Activated CD4-positive, alpha-beta T cell treated with anti-CD3 and anti-CD28 coated beads for 36 hours (primary cell): ENCODE measurements at regions of chr14 and their contacts with region 1.

Region 1: GRCh38 chr14:63478010-63478409 is 65.2 kb downstream of the PPP2R5E start:
- DNase-seq: peak; percentile 30
- ATAC-seq: peak; percentile 90
- H3K4me3 Mint-ChIP-seq: no peak overlapping the region
- H3K27ac Mint-ChIP-seq: no peak overlapping the region
- H3K4me1 Mint-ChIP-seq: peaks cover 52% of the 10 kb centered on the region
- H3K27me3 Mint-ChIP-seq: no peaks in the 10 kb centered on the region

Region 2: DNA sequence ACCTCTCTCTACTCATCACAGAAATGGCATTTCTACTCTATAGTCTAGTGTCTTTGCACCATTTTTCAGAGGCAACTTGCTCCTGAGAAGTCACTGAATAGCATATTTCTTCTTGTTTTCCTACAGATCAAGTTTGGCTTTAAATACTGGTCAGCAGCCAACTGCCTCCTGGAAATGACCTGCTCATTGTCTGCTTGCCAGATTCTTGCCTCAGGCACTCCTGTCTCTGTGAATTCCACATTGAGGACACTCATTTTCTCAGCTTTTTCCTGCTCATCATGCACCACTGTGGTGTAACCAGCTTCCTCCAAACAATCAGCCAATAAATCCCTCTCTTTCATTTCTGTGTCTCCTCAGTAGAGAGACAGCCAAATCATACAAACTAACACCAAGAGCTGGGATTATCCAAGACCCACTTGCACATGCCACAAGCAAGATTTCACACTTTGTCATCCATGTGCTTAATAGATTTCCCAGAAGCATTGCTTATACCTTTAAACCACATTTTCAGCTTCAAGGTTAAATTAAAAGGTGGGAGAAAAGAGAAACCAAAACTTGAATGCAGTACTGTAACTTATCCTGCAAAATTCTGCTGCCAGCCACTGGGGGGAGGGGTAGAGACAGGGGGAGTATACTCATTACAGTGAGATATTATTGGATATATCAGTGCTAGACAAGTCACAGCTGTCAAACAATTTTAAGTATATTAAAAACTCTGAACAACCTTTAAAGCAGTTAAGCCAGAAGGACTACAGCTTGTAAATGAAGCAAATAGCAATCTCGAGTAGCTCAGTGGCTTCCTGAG is 39.9 kb before region 1 on chr14:
- CTCF ChIA-PET with region 1: no interaction called
- POLR2A ChIA-PET with region 1: no interaction called
- intact Hi-C with region 1: loop called in 1 of 2 experiments (anchors 1 kb)
- DNase-seq: peak; percentile 58
- ATAC-seq: peak; percentile 84
- H3K4me3 Mint-ChIP-seq: peak overlapping the region; percentile 12
- H3K27ac Mint-ChIP-seq: peak overlapping the region; percentile 32
- H3K4me1 Mint-ChIP-seq: peaks cover 62% of the 10 kb centered on the region
- H3K27me3 Mint-ChIP-seq: no peaks in the 10 kb centered on the region

Region 3: DNA sequence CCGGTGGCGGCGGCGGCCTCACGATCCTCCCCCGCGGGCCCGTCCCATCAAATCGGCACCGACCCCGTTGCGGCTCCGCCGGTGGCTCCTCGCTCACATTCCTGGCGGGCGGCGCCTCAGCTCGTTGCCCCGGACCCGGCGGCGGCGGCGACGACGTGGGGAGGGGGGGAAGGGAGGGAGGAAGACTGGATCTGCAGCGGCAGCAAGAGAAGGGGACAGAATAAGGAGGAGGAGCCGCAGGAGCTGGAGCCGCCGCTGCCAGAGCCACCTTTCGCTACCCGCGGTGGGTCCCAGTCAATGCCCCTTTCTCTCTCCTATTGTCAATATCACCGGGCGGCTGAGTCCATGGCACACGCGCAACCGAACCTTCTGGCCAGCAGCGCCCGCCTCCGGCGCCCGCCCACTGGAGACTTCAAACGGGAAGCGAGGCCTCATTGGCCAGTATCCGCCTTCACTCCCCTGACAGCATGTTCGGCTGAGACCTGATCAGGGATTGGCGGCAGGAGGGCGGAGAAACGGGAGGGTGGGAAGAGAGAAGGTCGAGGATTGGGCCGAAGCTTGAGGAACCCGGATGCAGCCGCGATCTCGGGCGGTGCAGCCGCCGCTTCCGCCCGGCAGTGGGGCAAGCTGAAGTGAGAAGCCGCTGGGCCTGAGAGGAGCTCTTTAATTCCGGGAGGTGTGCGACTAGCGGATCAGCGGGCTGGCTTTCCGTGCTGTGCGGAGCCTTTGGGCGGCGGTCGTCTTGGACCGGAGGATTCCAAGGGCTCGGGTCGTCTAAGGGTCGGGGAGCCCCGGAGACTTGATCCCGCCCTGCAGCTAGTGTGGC is 65.2 kb after region 1 on chr14 and contains the start of gene PPP2R5E:
- CTCF ChIA-PET with region 1: no interaction called
- POLR2A ChIA-PET with region 1: no interaction called
- intact Hi-C with region 1: loop called in 1 of 2 experiments (anchors 1 kb)
- DNase-seq: peak; percentile 98
- ATAC-seq: peak; percentile 99
- H3K4me3 Mint-ChIP-seq: peak within 1 kb of the TSS; percentile 86
- H3K27ac Mint-ChIP-seq: peak within 1 kb of the TSS; percentile 85
- H3K4me1 Mint-ChIP-seq: peaks cover 26% of the 10 kb centered on the region
- H3K27me3 Mint-ChIP-seq: no peaks in the 10 kb centered on the region
- total RNA-seq, gene PPP2R5E: 38.4 to 40.4 TPM

Region 4: DNA sequence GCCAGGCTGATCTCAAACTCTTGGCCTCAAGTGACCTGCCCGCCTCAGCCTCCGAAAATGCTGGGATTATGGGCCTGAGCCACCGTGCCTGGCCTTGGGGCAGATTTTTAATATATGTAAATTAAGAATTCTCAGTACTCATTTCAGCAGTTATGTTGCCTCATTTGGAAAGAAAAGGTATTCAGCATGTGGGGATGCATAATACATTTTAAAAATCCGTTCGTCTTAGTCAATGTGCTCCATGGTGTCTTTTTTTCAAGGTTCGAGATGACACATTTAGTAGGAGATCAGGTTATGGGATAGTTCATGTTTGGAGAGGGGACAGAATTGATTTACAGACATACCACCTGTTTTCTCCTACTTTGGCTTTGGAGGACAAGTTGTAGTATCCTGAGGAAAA is 385.0 kb after region 1 on chr14:
- CTCF ChIA-PET with region 1: no interaction called
- POLR2A ChIA-PET with region 1: no interaction called
- intact Hi-C with region 1: loop called (anchors 5 to 10 kb)
- DNase-seq: no peak
- ATAC-seq: no peak
- H3K4me3 Mint-ChIP-seq: no peak overlapping the region
- H3K27ac Mint-ChIP-seq: no peak overlapping the region
- H3K4me1 Mint-ChIP-seq: peaks cover 53% of the 10 kb centered on the region
- H3K27me3 Mint-ChIP-seq: no peaks in the 10 kb centered on the region

Region 5: DNA sequence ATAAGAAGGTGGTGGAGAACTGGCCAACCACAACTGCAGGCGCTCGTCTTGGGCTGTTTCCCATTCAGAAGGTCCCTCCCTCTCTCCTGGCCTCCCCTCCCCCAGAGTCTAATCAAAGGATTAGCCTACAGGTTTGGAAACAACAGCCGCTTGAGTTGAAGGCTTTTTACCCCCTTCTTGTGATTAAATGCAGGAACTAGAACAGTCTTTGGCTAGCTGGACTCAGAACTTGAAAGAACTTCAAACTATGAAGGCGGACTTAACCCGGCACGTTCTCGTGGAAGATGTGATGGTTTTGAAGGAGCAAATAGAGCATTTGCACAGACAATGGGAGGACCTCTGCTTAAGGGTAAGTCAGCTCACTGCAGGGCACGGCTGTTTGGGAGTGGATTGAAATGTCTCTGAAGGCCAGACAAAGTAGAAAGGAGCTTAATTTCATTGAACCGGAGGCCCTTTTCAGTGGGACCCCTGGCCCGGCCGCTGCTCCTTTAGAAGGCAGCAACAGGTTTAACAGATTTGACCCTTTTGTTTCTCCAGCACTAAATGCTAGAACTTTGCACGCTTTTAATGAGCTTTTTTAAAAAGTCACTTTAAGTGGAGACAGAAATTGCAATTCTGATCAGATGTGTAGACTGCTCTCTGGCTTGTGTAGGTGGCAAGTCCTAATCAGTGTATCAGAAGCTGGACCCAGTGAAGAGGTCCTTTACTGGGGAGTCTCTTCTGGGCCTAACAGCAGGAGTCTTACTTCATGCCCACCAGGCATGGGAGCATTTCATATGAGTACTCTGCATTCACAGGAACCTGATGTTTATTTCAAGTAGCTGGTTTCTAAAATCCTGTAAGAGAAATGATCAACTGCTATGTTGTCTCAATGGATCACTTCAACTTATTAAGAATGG is 708.5 kb after region 1 on chr14:
- CTCF ChIA-PET with region 1: no interaction called
- POLR2A ChIA-PET with region 1: no interaction called
- intact Hi-C with region 1: no loop called
- DNase-seq: no peak
- ATAC-seq: no peak
- H3K4me3 Mint-ChIP-seq: no peak overlapping the region
- H3K27ac Mint-ChIP-seq: no peak overlapping the region
- H3K4me1 Mint-ChIP-seq: no peaks in the 10 kb centered on the region
- H3K27me3 Mint-ChIP-seq: no peaks in the 10 kb centered on the region